Common myeloid progenitor, CD34-positive (primary cell): ENCODE measurements at regions of chr13 and their contacts with region 1.

Region 1: GRCh38 chr13:79541426-79542049 is 60.6 kb downstream of the NDFIP2 start:
- DNase-seq: peak; percentile 76 to 86 (median 79)
- H3K4me3 ChIP-seq: no peak overlapping the region
- H3K27ac ChIP-seq: no peak overlapping the region
- H3K4me1 ChIP-seq: no peaks in the 10 kb centered on the region
- H3K27me3 ChIP-seq: no peaks in the 10 kb centered on the region

Region 2: GRCh38 chr13:79432992-79433391 is 108.5 kb before region 1 on chr13:
- CTCF ChIA-PET with region 1: interaction called, 10 read pairs
- POLR2A ChIA-PET with region 1: no interaction called
- DNase-seq: no peak
- H3K4me3 ChIP-seq: no peak overlapping the region
- H3K27ac ChIP-seq: no peak overlapping the region
- H3K4me1 ChIP-seq: no peaks in the 10 kb centered on the region
- H3K27me3 ChIP-seq: no peaks in the 10 kb centered on the region

Region 3: GRCh38 chr13:79480954-79481684 is 60.4 kb before region 1 on chr13 and contains the start of gene NDFIP2:
- CTCF ChIA-PET with region 1: interaction called, 14 read pairs
- POLR2A ChIA-PET with region 1: no interaction called
- DNase-seq: peak; percentile 80 to 89 (median 87)
- H3K4me3 ChIP-seq: peak within 1 kb of the TSS; percentile 40 to 85 (median 70)
- H3K27ac ChIP-seq: peak within 1 kb of the TSS in 1 of 2 experiments; percentile 43
- H3K4me1 ChIP-seq: peaks cover 12 to 24% (median 18%) of the 10 kb centered on the region in 4 experiments
- H3K27me3 ChIP-seq: peaks cover 13 to 78% (median 40%) of the 10 kb centered on the region in 5 experiments

Region 4: GRCh38 chr13:79528759-79529191 is 12.8 kb before region 1 on chr13:
- CTCF ChIA-PET with region 1: interaction called, 20 read pairs
- POLR2A ChIA-PET with region 1: no interaction called
- DNase-seq: no peak
- H3K4me3 ChIP-seq: no peak overlapping the region
- H3K27ac ChIP-seq: no peak overlapping the region
- H3K4me1 ChIP-seq: peaks cover 3 to 12% (median 7%) of the 10 kb centered on the region in 4 experiments
- H3K27me3 ChIP-seq: peaks cover 0 to 3% (median 0%) of the 10 kb centered on the region in 5 experiments